ENCODE measurements at regions of chr13 and their contacts with region 1.

Region 1: DNA sequence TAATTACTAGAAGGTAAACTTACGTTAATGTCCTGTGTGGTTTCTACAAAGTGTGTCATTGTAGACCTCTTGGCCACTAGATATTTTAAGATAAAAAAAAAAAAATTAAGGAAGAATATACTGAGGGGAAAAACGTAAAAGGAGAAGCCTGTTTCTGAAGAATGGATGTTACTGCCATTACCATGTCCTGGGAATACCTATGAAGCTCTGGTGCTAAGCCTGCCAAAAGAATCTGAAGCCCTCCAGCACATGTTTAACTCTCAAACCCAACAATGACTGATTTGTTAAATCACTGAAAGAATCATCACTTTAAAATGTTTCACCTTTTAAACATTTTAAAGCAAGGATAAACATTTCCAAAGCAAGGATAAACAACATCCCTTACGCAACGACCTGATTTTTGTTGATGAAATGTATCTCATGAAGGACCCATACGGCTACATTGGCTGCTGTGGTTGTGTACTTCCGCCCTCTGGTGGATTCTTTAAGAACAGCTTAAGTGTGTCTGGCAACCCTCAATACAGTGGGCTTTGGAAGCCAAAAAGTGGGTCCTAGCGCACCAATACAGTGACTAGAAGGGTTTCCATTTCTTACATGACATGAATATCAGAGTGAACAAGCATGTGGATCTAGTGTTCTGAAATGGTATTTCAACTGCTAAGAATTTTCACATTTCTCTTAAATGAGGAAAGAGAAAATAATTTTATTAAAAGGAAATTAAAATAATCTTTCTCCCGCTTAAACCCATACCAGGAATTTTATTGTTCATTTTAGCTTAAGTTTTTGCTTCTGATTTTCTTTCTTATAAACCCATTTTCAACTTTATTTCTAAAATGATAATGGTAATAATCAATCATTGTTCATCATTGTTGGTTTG is 74.5 kb upstream of the RAP2A start:
- DNase-seq: peak; percentile 54 to 80
- H3K4me3 ChIP-seq: no peak overlapping the region
- H3K4me3 Mint-ChIP-seq: no peak overlapping the region
- H3K27ac Mint-ChIP-seq: no peak overlapping the region
- H3K4me1 ChIP-seq: peaks cover 6% of the 10 kb centered on the region; the same call in 1 of the 2 replicates
- H3K4me1 Mint-ChIP-seq: peaks cover 21% of the 10 kb centered on the region
- H3K27me3 ChIP-seq: no peaks in the 10 kb centered on the region
- H3K27me3 Mint-ChIP-seq: no peaks in the 10 kb centered on the region
- CTCF ChIP-seq: peak; percentile 83 to 85

Region 2: DNA sequence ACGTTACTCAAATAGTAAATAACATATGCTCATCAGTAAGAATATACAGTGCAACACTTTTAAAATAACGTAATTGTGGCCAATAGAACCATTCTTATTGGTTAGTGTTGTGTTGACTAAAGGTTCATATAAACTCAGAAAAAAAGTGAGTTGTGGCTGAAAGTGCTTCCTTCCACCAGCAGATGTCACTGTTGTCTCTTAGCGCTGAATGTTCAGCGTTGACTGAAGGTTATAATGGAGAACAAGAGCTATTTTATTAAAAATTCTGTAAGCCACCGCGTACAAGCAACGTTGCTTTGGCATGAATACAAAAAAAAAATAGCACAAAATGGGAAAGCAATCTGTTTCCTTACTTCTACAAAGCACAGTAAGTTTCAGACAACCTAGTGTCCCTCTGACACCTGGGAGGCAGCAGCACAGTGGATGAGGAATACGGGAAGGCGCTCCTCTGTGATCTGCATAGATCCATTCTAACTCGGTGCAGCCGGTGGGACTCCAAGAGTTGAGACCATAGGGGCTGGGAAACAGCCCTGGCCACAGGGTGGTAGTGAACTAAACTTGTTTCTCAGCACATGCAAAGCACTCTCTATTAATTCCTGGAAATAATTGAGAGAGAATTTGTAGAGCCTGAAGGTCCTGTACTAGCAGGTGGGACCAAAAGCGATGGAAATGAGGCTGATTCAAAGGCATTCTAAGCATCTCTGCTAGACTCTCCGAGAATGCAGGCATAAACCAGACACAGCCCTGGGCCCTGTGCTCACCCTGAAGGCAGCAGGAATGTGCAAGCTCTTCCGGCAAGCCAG is 341.2 kb before region 1 on chr13:
- CTCF ChIA-PET with region 1: interaction called, 4 read pairs
- POLR2A ChIA-PET with region 1: no interaction called
- intact Hi-C with region 1: loop called (anchors 1 kb)
- DNase-seq: peak; percentile 52 to 59
- H3K4me3 ChIP-seq: no peak overlapping the region
- H3K4me3 Mint-ChIP-seq: peak overlapping the region; percentile 58
- H3K27ac Mint-ChIP-seq: no peak overlapping the region
- H3K4me1 ChIP-seq: peaks cover 21% of the 10 kb centered on the region
- H3K4me1 Mint-ChIP-seq: peaks cover 11% of the 10 kb centered on the region
- H3K27me3 ChIP-seq: no peaks in the 10 kb centered on the region
- H3K27me3 Mint-ChIP-seq: peaks cover 7% of the 10 kb centered on the region
- CTCF ChIP-seq: peak; percentile 79 to 91

Region 3: DNA sequence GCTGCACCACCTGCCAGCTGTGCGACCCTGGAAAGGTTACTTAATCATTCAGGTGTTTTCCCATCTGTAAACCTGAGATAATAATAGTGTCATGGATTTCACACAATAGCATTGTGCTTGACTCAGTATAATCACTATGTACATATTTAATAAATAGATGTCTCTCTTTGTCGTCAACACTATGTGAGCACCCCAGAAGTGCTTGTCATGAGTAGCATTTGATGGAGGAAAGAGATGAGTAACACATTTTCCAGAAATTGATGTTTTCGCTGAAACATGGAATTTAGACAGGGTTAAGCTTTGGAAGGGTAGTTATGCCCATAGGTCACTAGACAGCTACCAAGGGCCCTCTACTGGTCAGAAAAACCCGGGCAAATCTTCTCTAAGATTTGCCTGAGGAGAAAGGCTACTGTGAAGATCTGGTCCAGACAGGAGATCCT is 146.8 kb before region 1 on chr13:
- CTCF ChIA-PET with region 1: interaction called, 5 read pairs
- POLR2A ChIA-PET with region 1: no interaction called
- intact Hi-C with region 1: loop called (anchors 2 kb)
- DNase-seq: peak in 1 of 2 experiments; percentile 65
- H3K4me3 ChIP-seq: no peak overlapping the region
- H3K4me3 Mint-ChIP-seq: no peak overlapping the region
- H3K27ac Mint-ChIP-seq: no peak overlapping the region
- H3K4me1 ChIP-seq: peaks cover 24% of the 10 kb centered on the region
- H3K4me1 Mint-ChIP-seq: peaks cover 22% of the 10 kb centered on the region
- H3K27me3 ChIP-seq: no peaks in the 10 kb centered on the region
- H3K27me3 Mint-ChIP-seq: no peaks in the 10 kb centered on the region
- CTCF ChIP-seq: peak; percentile 59 to 69

Region 4: DNA sequence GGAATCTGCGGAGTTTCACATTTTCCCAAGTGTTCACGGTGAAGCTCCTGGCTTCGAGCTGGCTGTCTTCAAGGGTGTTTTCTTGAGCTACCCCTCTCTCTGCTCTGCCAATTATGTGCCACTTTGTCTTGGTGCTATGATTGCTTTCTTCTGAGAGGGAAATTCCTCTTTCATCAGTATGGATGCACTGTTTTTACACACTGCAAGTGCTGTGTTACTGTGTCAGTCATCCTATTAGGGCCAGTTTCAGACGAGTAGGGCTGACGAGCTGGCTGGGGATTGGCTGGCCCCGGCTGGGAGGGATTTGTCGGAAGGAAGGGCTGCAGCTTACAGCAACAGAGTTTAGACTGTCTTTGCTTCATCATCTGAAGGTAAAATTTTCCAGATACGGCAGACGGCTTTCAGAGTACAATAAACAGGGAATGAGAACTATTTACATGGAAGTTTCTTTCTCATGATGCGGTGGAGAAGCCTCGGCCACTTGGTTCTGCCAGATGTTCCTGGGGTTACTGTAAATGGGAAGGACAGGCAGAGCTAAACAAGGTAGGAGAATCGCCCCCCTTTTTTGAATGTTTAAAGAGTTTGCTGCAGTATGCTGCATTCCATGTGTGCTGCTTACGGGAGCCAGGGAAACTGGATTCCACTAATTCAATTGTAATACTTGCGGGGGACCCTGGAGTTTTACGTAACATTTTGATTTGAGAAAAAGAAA is 137.3 kb before region 1 on chr13 and contains the start of gene MBNL2:
- CTCF ChIA-PET with region 1: interaction called, 5 read pairs
- POLR2A ChIA-PET with region 1: no interaction called
- intact Hi-C with region 1: loop called (anchors 2 kb)
- DNase-seq: peak; percentile 91 to 92
- H3K4me3 ChIP-seq: peak within 1 kb of the TSS; percentile 51
- H3K4me3 Mint-ChIP-seq: peak within 1 kb of the TSS; percentile 95
- H3K27ac Mint-ChIP-seq: peak within 1 kb of the TSS; percentile 89
- H3K4me1 ChIP-seq: peaks cover 43% of the 10 kb centered on the region
- H3K4me1 Mint-ChIP-seq: peaks cover 40% of the 10 kb centered on the region
- H3K27me3 ChIP-seq: no peaks in the 10 kb centered on the region
- H3K27me3 Mint-ChIP-seq: no peaks in the 10 kb centered on the region
- CTCF ChIP-seq: no peak
- total RNA-seq, gene MBNL2: 41.6 TPM in 2 replicates

Region 5: DNA sequence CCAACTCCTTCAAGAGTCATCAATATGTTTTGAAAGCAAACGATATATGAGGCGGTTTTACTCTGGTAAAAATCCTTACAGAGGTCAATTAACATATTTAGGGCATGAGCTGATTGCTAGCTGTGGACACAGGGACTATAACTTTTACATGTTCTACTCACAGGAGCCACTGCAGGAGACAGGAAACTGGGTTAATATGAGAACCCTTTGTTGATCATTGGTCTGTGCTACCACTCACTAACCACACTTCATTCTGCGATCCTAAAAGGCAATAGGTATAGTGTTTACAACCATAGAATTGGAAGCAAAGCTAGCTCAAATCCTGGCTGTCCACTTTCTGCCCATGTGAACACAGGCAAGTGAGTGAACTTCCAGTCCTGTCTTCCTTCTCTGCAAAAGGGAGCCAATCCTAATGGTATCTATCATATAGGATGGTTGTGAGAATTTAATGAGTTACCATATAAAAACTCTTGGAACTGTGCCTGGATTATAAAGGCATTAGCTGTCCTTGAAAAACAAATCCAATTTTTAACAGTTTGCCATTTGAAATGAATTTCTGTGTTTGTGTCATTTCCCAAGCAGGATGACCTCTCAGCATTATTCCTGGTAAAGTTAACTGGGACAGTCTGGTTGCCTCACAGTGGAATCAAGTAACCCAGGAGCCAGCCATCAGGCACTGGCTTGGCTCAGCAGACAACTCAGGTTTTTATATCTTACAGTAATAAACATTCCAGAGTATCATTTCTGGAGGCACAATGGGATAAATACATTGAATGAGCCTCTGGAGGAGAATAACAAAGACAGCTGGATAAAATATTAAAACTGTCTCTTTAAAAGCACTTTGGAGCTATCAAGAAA is 44.7 kb after region 1 on chr13:
- CTCF ChIA-PET with region 1: no interaction called
- POLR2A ChIA-PET with region 1: no interaction called
- intact Hi-C with region 1: no loop called
- DNase-seq: no peak
- H3K4me3 ChIP-seq: no peak overlapping the region
- H3K4me3 Mint-ChIP-seq: no peak overlapping the region
- H3K27ac Mint-ChIP-seq: no peak overlapping the region
- H3K4me1 ChIP-seq: no peaks in the 10 kb centered on the region
- H3K4me1 Mint-ChIP-seq: no peaks in the 10 kb centered on the region
- H3K27me3 ChIP-seq: no peaks in the 10 kb centered on the region
- H3K27me3 Mint-ChIP-seq: peaks cover 19% of the 10 kb centered on the region
- CTCF ChIP-seq: no peak

Measured in Caco-2 (cell line).